Heart left ventricle (tissue), 16 donors: ENCODE measurements at regions of chr11 and their contacts with region 1.

Region 1: GRCh38 chr11:111982019-111982464 is 43.2 kb upstream of the DLAT start:
- DNase-seq: peak in 4 of 5 donors; percentile 39 to 70 (median 52)
- ATAC-seq: peak; percentile 48 to 61 (median 53)
- H3K4me3 ChIP-seq: peak overlapping the region in 1 of 12 donors; percentile 18
- H3K27ac ChIP-seq: peak overlapping the region in 11 of 12 donors; percentile 8 to 92 (median 55)
- H3K4me1 ChIP-seq: peaks cover 0 to 57% (median 24%) of the 10 kb centered on the region in 12 donors
- H3K27me3 ChIP-seq: peaks cover 0 to 20% (median 0%) of the 10 kb centered on the region in 9 donors
- CTCF ChIP-seq: peak; percentile 30 to 67 (median 54)
- POLR2A ChIP-seq: no peak

Region 2: DNA sequence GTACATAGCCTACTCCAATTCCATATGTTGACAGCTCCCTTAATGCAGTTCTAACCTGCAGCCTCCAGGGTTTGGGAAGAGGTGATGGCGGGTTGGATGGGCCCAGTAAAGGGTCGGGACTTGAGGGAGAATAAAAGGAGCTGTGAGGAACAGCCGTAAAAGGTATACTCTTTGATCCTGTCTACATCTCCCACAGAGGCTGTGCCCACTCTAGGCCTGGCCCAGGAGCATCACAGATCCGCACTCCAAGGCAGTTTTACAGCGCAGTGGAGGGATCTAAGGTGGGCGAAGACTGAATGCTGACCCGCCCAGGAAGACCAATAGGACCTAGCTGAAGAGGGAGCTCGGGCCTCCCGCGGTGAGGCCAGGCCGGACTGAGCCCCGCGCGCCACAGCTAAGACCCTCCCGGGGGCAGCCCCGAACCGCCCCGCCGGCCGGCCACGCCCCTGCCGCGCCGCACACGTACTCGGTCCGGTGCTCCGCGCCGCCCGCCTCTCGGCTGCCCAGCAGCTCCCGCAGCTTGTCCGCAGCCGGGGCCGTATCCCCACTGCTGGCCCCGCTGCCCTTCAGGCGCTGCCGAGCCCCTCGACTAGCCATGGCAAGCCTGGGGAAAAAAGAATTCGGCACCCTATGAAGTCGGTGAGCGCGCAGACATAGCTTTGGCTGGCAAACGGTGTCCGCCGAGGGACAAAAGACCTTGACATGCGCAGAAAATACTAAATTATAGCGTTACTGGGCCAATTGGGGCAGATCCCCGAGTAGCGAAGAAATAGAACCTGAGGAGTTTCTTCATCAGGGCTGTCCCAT is 111.0 kb before region 1 on chr11 and contains the start of gene ALG9:
- intact Hi-C with region 1: loop called in 5 of 10 experiments (anchors 5 kb)
- DNase-seq: peak; percentile 88 to 92 (median 89)
- ATAC-seq: peak; percentile 66 to 95 (median 90)
- H3K4me3 ChIP-seq: peak within 1 kb of the TSS; percentile 70 to 100 (median 86)
- H3K27ac ChIP-seq: peak within 1 kb of the TSS; percentile 84 to 94 (median 91)
- H3K4me1 ChIP-seq: peaks cover 0 to 23% (median 11%) of the 10 kb centered on the region in 12 donors
- H3K27me3 ChIP-seq: no peaks in the 10 kb centered on the region
- CTCF ChIP-seq: peak in 2 of 12 donors; percentile 23 to 24
- POLR2A ChIP-seq: peak in 1 of 2 donors; percentile 32
- total RNA-seq, gene ALG9: 13.5 to 26.5 (median 17.6) TPM

Region 3: DNA sequence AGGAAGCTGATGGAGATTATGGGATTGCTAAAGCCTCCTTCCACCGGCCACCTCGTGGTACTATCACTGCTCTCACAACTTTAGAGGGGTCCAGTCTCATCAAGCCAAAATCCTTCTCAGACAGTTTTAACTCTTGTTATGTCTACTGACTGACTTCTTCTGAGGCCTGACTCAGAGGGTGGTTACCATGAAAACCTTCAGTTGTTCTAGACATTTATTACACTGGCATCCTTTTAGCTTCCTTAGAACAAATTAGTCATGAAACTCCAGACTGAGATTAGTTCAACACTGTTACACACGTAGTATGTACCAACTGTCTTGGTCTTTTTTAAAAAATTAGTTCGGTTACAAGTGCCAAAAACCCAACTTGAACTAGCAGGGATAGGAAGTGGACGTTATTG is 37.4 kb before region 1 on chr11:
- intact Hi-C with region 1: loop called (anchors 2 to 5 kb)
- DNase-seq: no peak
- ATAC-seq: peak in 3 of 4 donors; percentile 6 to 28 (median 16)
- H3K4me3 ChIP-seq: no peak overlapping the region
- H3K27ac ChIP-seq: peak overlapping the region in 5 of 12 donors; percentile 11 to 52 (median 16)
- H3K4me1 ChIP-seq: peaks cover 0 to 41% (median 12%) of the 10 kb centered on the region in 12 donors
- H3K27me3 ChIP-seq: no peaks in the 10 kb centered on the region
- CTCF ChIP-seq: no peak
- POLR2A ChIP-seq: no peak